CD4-positive, alpha-beta memory T cell (primary cell): ENCODE measurements at regions of chr1 and their contacts with region 1.

Region 1: DNA sequence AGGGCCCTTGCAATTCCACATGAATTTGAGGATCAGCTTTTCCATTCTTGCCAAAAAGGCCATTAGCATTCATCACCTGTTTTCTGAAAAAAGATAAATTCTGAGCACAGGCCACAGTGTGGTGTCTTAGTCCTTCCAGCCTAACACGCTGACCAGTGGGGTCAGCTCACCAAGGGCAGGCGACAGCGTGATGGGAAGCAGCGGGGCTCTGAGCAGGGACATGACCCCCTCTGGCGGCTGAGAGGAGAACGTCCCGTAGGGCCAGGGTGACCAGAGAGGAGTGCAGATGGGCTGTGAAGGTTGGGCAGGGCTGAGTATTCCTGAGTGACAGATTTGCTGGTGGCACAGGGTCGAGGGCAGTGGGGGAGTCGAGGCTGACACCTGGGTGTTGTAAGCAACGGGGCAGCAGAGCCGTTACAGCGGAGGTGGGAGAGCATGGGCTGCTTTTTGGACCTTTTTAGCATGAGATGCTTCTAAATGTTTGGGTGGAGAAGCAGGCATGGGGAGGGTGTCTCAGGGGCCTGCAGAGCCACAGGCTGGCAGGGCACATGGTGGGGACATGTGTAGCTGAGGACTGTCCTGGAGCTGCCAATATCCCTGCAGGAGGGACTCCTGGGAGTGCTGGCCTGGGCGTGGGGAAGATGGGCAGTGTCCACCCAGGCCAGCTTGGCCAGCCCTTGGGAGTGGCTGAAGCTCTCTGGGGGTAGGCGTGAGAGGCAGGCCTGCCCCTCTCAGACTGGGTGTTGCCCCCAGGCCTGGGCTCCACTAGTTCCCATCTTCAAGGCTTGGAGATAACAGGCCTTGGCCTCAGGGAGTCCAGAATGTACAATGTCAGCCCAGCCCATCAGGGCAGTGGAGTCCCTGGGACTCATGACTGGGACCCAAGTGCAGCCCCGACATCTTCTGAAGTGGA is 8.6 kb upstream of the CALML6 start:
- DNase-seq: peak in 4 of 5 donors; percentile 54 to 67 (median 58)
- H3K4me3 ChIP-seq: no peak overlapping the region
- H3K4me3 Mint-ChIP-seq: peak overlapping the region in 6 of 8 donors; percentile 56 to 75 (median 62)
- H3K27ac ChIP-seq: no peak overlapping the region
- H3K27ac Mint-ChIP-seq: peak overlapping the region; percentile 36 to 86 (median 72)
- H3K4me1 ChIP-seq: peaks cover 21% of the 10 kb centered on the region
- H3K4me1 Mint-ChIP-seq: peaks cover 7 to 16% (median 11%) of the 10 kb centered on the region in 4 donors
- H3K27me3 ChIP-seq: no peaks in the 10 kb centered on the region
- H3K27me3 Mint-ChIP-seq: no peaks in the 10 kb centered on the region

Region 2: DNA sequence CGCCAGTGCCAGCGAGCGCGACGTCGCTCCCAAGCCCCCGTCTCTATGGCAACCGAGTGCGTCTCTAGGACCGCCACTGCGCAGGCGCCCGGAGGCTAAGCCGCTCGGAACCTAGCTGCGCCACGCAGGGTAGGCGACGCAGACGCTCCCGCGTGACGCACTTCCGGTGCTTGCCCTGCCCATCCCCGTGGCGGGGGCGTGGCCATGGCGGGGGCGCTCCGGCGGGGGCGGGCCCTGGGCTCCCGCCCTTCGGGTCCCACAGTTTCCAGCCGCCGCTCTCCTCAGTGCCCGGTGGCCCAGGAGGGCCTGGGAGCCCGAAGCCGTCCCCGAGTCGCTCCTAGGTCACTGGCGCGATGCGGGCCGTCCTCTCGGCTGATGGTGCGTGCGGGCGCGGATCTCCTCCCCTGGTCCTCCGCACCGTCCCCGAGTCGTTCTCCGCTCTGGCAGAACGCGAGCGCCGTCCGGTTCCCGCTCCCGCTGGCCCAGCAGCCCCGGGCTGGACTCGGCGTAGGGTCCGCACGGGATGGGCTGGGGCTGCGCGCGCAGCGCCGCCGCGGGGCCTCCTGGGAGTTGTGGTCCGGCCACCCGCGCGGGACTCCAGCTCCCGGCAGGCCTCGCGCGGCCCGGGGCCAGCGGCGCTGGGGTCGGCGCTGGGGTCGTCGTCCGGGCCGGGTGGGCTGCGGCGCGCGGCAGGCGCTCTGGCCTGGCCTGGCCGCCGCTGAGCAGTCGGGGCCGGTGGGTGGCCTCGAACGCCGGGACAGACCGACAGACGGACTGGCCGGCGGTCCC is 291.0 kb before region 1 on chr1 and contains the start of gene MIB2:
- CTCF ChIA-PET with region 1: interaction called, 3 read pairs
- POLR2A ChIA-PET with region 1: interaction called, 3 read pairs
- intact Hi-C with region 1: loop called (anchors 1 kb)
- DNase-seq: peak; percentile 98 to 99 (median 99)
- H3K4me3 ChIP-seq: peak within 1 kb of the TSS; percentile 73 to 89
- H3K4me3 Mint-ChIP-seq: peak within 1 kb of the TSS; percentile 89 to 97 (median 94)
- H3K27ac ChIP-seq: peak within 1 kb of the TSS; percentile 100
- H3K27ac Mint-ChIP-seq: peak within 1 kb of the TSS; percentile 98 to 100 (median 99)
- H3K4me1 ChIP-seq: peaks cover 29% of the 10 kb centered on the region
- H3K4me1 Mint-ChIP-seq: peaks cover 10 to 38% (median 26%) of the 10 kb centered on the region in 4 donors
- H3K27me3 ChIP-seq: no peaks in the 10 kb centered on the region
- H3K27me3 Mint-ChIP-seq: no peaks in the 10 kb centered on the region
- total RNA-seq, gene MIB2: 112 to 114 TPM

Region 3: DNA sequence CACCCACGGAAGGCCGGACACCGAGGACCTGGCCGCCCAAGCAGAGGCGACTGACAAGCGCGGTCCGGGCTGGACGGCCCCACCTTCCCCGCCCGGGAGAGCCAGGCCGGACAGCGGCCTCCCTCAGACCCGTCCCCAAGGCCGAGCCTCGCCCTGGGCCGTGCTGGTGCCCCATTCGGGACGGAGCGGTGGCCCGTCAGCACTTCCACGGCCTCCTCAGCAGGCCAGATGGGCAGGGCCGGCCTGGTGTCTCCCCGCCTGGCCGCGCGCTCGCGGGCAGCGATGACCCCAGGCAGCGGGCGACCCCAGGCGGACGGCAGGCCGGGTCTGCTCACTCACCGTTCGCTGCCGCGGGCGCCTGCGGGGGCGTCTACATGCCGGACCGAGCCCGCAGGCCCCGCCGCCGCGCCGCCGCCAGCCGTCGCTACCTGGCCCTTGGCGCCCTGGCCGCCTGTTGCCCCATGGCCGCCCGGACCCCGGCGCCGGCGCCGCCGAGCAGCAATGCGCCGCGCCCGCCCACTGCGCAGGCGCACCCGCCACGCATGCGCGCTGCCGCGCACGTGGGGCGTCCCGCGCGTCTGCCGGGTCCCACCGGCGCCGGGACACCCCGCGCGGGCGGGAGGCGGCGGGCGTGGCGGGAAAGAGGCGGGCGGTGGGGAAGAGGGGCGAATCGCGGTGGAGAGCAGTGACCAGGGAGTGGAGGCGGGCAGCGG is 128.3 kb before region 1 on chr1 and contains the start of gene NADK:
- CTCF ChIA-PET with region 1: interaction called, 15 read pairs
- POLR2A ChIA-PET with region 1: interaction called, 22 read pairs
- intact Hi-C with region 1: loop called (anchors 1 kb)
- DNase-seq: peak; percentile 69 to 84 (median 78)
- H3K4me3 ChIP-seq: peak within 1 kb of the TSS; percentile 36 to 72
- H3K4me3 Mint-ChIP-seq: peak within 1 kb of the TSS; percentile 86 to 96 (median 88)
- H3K27ac ChIP-seq: peak within 1 kb of the TSS; percentile 78
- H3K27ac Mint-ChIP-seq: peak within 1 kb of the TSS; percentile 93 to 98 (median 95)
- H3K4me1 ChIP-seq: peaks cover 69% of the 10 kb centered on the region
- H3K4me1 Mint-ChIP-seq: peaks cover 47 to 67% (median 58%) of the 10 kb centered on the region in 4 donors
- H3K27me3 ChIP-seq: no peaks in the 10 kb centered on the region
- H3K27me3 Mint-ChIP-seq: no peaks in the 10 kb centered on the region
- total RNA-seq, gene NADK: 48.9 to 56.0 TPM

Region 4: GRCh38 chr1:1858382-1859086 is 47.9 kb before region 1 on chr1:
- CTCF ChIA-PET with region 1: interaction called, 9 read pairs
- POLR2A ChIA-PET with region 1: no interaction called
- intact Hi-C with region 1: loop called (anchors 1 kb)
- DNase-seq: peak; percentile 39 to 61 (median 47)
- H3K4me3 ChIP-seq: no peak overlapping the region
- H3K4me3 Mint-ChIP-seq: peak overlapping the region in 7 of 8 donors; percentile 44 to 62 (median 55)
- H3K27ac ChIP-seq: peak overlapping the region; percentile 49
- H3K27ac Mint-ChIP-seq: peak overlapping the region; percentile 73 to 95 (median 89)
- H3K4me1 ChIP-seq: peaks cover 88% of the 10 kb centered on the region
- H3K4me1 Mint-ChIP-seq: peaks cover 49 to 88% (median 70%) of the 10 kb centered on the region in 4 donors
- H3K27me3 ChIP-seq: no peaks in the 10 kb centered on the region
- H3K27me3 Mint-ChIP-seq: no peaks in the 10 kb centered on the region

Region 5: DNA sequence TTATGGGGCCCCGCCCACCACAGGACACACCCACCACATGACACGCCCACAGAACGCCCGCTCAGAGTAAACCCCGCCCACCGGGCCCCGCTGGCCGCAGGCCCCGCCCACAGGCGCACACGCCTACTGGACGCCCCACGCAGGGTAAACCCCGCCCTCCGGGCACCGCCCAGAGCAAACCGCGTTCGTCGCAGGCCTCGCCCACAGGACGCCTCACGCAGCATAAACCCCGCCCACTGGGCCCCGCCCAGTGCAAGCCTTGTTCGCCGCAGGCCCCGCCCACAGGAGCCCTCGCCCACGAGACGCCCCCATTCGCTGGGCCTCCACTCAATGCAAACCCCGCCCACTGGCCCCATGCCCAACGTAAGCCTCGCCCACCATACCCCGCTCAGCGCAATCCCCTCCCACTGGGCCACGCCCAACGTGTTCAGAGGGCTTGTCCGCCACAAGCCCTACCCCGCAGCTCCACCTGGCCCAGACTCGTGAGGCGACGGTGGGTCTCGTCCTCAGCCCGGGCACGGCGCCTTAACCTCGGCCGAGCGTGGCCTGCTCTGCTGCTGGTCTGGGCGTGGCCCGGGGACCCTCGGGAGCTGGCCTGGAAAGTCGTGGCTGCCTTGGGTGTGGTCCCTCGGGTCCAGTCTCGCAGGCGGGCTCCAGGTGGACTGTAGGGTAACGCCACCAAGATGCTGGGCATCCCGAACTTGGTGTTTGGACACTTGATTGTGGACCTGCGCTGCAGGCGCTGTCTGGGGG is 13.0 kb after region 1 on chr1:
- CTCF ChIA-PET with region 1: interaction called, 3 read pairs
- POLR2A ChIA-PET with region 1: interaction called, 3 read pairs
- intact Hi-C with region 1: loop called (anchors 1 kb)
- DNase-seq: peak; percentile 99 to 100 (median 100)
- H3K4me3 ChIP-seq: peak overlapping the region in 1 of 2 donors; percentile 68
- H3K4me3 Mint-ChIP-seq: peak overlapping the region; percentile 24 to 81 (median 68)
- H3K27ac ChIP-seq: peak overlapping the region; percentile 36
- H3K27ac Mint-ChIP-seq: peak overlapping the region; percentile 78 to 96 (median 88)
- H3K4me1 ChIP-seq: peaks cover 17% of the 10 kb centered on the region
- H3K4me1 Mint-ChIP-seq: peaks cover 1 to 15% (median 6%) of the 10 kb centered on the region in 4 donors
- H3K27me3 ChIP-seq: no peaks in the 10 kb centered on the region
- H3K27me3 Mint-ChIP-seq: peaks cover 0 to 1% of the 10 kb centered on the region in 2 donors